MCF 10A (cell line): ENCODE measurements at regions of chr1 and their contacts with region 1.

Region 1: DNA sequence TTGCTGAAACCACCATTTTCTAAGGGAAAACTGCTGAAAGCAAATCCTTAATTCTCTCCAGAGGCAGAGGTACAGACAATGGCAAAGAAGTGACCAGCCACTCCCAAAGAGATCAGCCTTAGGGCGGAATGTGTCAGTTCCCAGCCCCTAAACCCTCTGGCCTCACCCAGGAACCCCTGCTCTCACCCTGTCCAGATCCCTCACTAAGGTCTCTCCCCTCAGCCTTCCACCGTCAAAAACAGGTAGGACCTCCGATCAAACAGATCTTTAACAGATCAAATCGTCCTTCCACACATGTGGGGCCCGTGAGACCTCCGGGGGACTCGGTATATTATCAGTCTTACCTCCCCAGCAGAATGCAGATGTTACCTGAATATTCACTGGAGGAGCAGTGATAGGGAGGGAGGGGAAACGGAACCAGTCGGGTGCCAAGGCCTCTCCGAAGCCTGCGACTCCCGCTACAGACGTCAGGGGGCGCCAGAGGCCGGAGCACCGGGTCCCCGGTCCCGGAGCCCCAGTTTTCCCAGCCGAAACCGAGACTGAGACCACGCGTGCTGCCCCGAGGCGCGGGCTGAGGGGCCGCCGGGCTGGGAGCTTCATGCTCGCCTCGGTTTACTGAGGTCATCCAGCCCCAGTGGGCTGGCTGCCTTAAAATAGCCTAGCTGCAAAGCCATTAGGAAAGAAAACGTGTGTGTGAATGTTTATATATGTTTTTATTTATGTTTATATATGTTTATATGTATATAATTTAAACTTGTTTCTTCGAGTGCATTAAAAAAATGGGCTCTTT is 23.6 kb downstream of the GPA33 start:
- DNase-seq: peak; percentile 84
- H3K4me3 Mint-ChIP-seq: peak overlapping the region; percentile 32
- H3K27ac Mint-ChIP-seq: peak overlapping the region; percentile 43
- H3K4me1 Mint-ChIP-seq: no peaks in the 10 kb centered on the region
- H3K27me3 Mint-ChIP-seq: peaks cover 18% of the 10 kb centered on the region
- CTCF ChIP-seq: peak; percentile 100

Region 2: DNA sequence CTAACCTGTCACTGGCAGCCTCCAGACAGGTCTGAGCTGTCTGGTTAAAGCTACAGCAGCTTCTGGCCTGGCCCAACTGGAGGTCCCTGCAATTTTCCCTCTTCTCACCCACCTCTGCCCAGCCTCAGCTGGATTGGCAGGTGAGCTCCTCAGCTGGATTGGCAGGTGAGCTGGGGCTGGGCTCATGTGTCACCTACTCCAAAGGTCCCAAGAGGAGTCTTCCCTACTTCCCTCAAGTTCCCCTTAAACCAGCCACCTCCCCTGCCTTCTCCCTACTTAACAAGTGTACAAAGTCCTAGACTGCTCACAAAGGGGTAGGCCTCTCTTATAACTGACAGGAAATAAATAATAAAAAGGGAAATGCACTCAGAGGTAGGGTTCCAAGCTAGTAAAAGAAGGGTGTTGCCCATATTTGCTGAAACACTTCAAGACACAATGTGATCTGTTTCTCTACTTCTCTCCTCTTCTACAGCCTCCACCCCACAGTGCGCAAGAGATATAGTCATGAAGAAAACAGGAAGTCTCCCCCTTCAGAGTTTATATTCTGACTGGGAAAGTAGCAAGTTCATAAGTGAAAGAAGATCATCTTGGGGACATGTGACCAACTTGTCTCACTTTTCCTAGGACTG is 23.9 kb after region 1 on chr1 and contains the start of gene GPA33:
- CTCF ChIA-PET with region 1: interaction called, 45 read pairs
- POLR2A ChIA-PET with region 1: no interaction called
- intact Hi-C with region 1: no loop called
- DNase-seq: no peak
- H3K4me3 Mint-ChIP-seq: no peak within 1 kb of the TSS
- H3K27ac Mint-ChIP-seq: no peak within 1 kb of the TSS
- H3K4me1 Mint-ChIP-seq: peaks cover 9% of the 10 kb centered on the region
- H3K27me3 Mint-ChIP-seq: no peaks in the 10 kb centered on the region
- CTCF ChIP-seq: no peak
- total RNA-seq, gene GPA33: not detected in 2 replicates

Region 3: GRCh38 chr1:167128261-167129227 is 62.0 kb after region 1 on chr1:
- CTCF ChIA-PET with region 1: interaction called, 259 read pairs
- POLR2A ChIA-PET with region 1: no interaction called
- intact Hi-C with region 1: loop called (anchors 1 kb)
- DNase-seq: peak; percentile 31
- H3K4me3 Mint-ChIP-seq: no peak overlapping the region
- H3K27ac Mint-ChIP-seq: no peak overlapping the region
- H3K4me1 Mint-ChIP-seq: no peaks in the 10 kb centered on the region
- H3K27me3 Mint-ChIP-seq: peaks cover 33% of the 10 kb centered on the region
- CTCF ChIP-seq: peak; percentile 43

Region 4: GRCh38 chr1:167229719-167230385 is 163.3 kb after region 1 on chr1:
- CTCF ChIA-PET with region 1: interaction called, 10 read pairs
- POLR2A ChIA-PET with region 1: no interaction called
- intact Hi-C with region 1: no loop called
- DNase-seq: no peak
- H3K4me3 Mint-ChIP-seq: no peak overlapping the region
- H3K27ac Mint-ChIP-seq: no peak overlapping the region
- H3K4me1 Mint-ChIP-seq: peaks cover 20% of the 10 kb centered on the region
- H3K27me3 Mint-ChIP-seq: no peaks in the 10 kb centered on the region
- CTCF ChIP-seq: no peak

Region 5: GRCh38 chr1:167401260-167401873 is 334.8 kb after region 1 on chr1:
- CTCF ChIA-PET with region 1: interaction called, 3 read pairs
- POLR2A ChIA-PET with region 1: interaction called, 3 read pairs
- intact Hi-C with region 1: loop called (anchors 2 kb)
- DNase-seq: peak; percentile 76
- H3K4me3 Mint-ChIP-seq: no peak overlapping the region
- H3K27ac Mint-ChIP-seq: peak overlapping the region; percentile 23
- H3K4me1 Mint-ChIP-seq: peaks cover 6% of the 10 kb centered on the region
- H3K27me3 Mint-ChIP-seq: no peaks in the 10 kb centered on the region
- CTCF ChIP-seq: peak; percentile 72